Mammary epithelial cell (primary cell): ENCODE measurements at regions of chr1 and their contacts with region 1.

Region 1: GRCh38 chr1:185170291-185170848 is 13.4 kb downstream of the SWT1 start:
- DNase-seq: peak; percentile 42
- H3K4me3 ChIP-seq: no peak overlapping the region
- H3K27ac ChIP-seq: no peak overlapping the region
- H3K4me1 ChIP-seq: no peaks in the 10 kb centered on the region
- H3K27me3 ChIP-seq: no peaks in the 10 kb centered on the region
- CTCF ChIP-seq: peak; percentile 55 to 78

Region 2: DNA sequence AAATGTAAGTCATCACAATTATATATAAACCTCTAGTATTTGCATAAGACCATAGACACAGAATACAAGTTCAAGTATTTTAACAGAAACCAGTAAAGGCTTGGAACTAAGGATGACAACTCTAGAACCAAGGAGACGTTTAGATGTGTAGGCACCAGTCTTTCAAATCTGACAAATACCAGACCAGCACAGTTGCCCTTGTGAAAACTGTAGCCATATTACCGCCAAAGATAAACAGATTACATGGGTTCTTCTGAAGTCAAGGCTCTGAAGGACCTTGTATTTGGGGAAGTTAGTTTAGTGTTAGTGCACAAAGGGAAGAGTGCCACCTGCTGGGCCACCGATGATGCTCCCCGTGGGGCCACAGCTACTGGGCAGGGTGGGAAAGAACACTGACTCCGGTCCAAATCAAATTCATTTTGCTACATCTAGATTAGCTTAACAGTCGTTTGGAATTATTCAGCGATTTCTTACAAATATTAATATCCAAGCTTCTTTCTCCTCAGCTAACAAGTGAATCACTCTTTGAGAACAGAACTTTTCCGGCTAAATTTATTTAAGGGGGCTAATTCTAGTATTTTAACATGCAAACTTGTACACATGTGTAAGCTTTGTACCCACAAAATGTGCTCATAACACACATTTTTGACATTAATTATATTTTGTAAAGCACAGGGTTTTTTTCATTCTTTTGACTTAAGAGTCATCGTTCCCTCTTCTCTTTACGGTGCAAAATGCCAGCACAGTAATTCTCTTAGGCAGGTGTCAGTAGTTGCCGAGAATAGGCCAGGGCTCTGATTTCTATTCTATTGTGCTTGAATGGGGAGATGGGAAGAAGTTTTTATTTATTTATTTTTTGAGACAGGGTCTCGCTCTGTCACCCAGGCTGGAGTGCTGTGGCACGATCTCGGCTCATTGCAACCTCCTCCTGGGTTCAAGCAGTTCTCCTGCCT is 188.1 kb before region 1 on chr1:
- CTCF ChIA-PET with region 1: no interaction called
- dilution Hi-C with region 1: no loop called
- in situ Hi-C with region 1: no loop called
- intact Hi-C with region 1: loop called (anchors 1 kb)
- DNase-seq: peak; percentile 58
- H3K4me3 ChIP-seq: no peak overlapping the region
- H3K27ac ChIP-seq: no peak overlapping the region
- H3K4me1 ChIP-seq: no peaks in the 10 kb centered on the region
- H3K27me3 ChIP-seq: peaks cover 2% of the 10 kb centered on the region
- CTCF ChIP-seq: peak; percentile 94 to 98

Region 3: GRCh38 chr1:185483664-185484450 is 313.5 kb after region 1 on chr1:
- CTCF ChIA-PET with region 1: no interaction called
- dilution Hi-C with region 1: no loop called
- in situ Hi-C with region 1: no loop called
- intact Hi-C with region 1: no loop called
- DNase-seq: peak; percentile 92
- H3K4me3 ChIP-seq: no peak overlapping the region
- H3K27ac ChIP-seq: peak overlapping the region; percentile 29
- H3K4me1 ChIP-seq: peaks cover 17% of the 10 kb centered on the region
- H3K27me3 ChIP-seq: no peaks in the 10 kb centered on the region
- CTCF ChIP-seq: no peak

Region 4: DNA sequence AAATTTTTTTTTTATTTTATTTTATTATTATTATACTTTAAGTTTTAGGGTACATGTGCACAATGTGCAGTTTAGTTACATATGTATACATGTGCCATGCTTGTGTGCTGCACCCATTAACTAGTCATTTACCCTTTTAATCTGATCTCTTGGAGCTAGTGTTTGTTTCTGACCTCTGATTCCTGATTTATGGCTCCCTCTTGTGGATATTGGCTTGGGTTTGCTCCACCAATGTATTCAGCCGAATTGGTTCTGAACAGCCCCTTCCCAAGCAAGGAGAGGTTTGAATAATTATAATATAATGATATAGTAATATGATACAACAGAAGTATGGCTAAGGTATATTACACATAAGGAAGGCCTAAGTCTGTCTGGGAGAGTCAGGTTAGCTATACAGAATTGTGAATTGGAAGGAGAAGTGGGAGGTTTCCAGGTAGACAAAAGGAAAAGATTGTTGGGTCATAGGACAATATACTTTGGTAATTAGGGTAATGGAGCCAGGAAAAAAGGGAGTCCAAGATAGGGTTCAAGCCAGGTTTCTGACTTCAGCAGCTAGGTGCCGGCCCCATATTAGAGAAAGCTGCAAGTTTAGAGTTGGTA is 510.8 kb after region 1 on chr1:
- CTCF ChIA-PET with region 1: no interaction called
- dilution Hi-C with region 1: no loop called
- in situ Hi-C with region 1: no loop called
- intact Hi-C with region 1: loop called (anchors 5 kb)
- DNase-seq: peak; percentile 41
- H3K4me3 ChIP-seq: no peak overlapping the region
- H3K27ac ChIP-seq: no peak overlapping the region
- H3K4me1 ChIP-seq: no peaks in the 10 kb centered on the region
- H3K27me3 ChIP-seq: no peaks in the 10 kb centered on the region
- CTCF ChIP-seq: peak; percentile 67 to 68